Ovary (tissue), 10 donors: ENCODE measurements at regions of chr15 and their contacts with region 1.

Region 1: DNA sequence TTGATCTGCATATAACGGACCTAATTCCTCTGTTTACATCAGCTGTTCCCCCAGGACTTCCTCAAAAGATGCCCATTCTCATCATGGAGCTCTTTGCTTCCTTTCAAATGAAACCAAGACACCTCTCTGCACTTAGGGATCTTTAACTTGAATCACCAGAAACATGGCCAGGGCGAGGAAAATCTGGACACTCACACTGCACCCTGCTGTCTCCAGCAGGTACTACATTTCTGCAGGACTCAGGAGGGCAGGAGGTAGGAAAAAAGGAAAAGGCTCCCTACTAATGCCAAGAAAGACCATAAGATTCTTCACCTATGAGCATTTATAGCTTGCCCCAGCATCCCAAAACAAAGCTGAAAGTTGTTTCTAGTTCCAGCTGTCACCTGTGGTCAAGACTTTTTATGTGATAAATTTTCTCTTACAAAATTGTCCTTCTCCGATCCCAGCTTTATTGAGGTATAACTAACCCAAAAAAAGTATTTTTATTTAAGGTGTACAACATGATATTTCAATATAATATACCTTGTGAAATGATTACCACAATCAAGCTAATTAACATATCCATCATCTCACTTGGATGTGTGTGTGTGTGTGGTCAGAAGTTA is 87.3 kb upstream of the C15orf61 start:
- DNase-seq: peak; percentile 14 to 57 (median 48)
- H3K4me3 ChIP-seq: no peak overlapping the region
- H3K27ac ChIP-seq: no peak overlapping the region
- H3K4me1 ChIP-seq: no peaks in the 10 kb centered on the region
- H3K27me3 ChIP-seq: no peaks in the 10 kb centered on the region
- CTCF ChIP-seq: peak; percentile 43 to 56 (median 49)
- EP300 ChIP-seq: no peak
- POLR2A ChIP-seq: no peak

Region 2: DNA sequence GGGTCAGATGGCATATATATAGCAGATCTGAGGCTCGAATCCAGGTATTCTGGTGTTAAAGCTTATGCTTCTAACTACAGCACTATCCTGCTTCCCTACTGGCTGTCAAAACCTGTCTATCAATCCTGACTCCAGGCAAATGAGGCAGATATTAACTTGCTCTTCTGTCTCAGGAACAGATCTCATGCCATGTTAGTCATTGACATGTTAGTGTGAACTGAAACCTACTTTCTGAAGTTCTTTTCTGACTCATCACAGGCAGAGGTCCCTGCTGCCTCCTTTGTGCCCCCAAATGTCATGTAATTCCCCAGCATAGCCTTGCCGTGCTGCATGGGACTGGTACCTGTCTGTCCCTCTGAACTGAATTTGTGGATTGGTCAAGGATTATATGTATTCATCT is 493.2 kb before region 1 on chr15:
- intact Hi-C with region 1: loop called (anchors 5 to 10 kb)
- DNase-seq: no peak
- H3K4me3 ChIP-seq: no peak overlapping the region
- H3K27ac ChIP-seq: no peak overlapping the region
- H3K4me1 ChIP-seq: peaks cover 2% of the 10 kb centered on the region
- H3K27me3 ChIP-seq: no peaks in the 10 kb centered on the region
- CTCF ChIP-seq: no peak
- EP300 ChIP-seq: no peak
- POLR2A ChIP-seq: no peak